ENCODE measurements at regions of chr5 and their contacts with region 1.

Region 1: GRCh38 chr5:172283020-172283861 is at the start of gene UBTD2:
- DNase-seq: peak; percentile 82
- H3K4me3 ChIP-seq: peak within 1 kb of the TSS; percentile 94
- H3K27ac ChIP-seq: peak within 1 kb of the TSS; percentile 44
- H3K4me1 ChIP-seq: peaks cover 25% of the 10 kb centered on the region
- CTCF ChIP-seq: peak; percentile 67; the same call in 1 of the 2 replicates
- total RNA-seq, gene UBTD2: 14.7 and 16.0 TPM in 2 replicates

Region 2: GRCh38 chr5:172095502-172096206 is 187.6 kb before region 1 on chr5:
- CTCF ChIA-PET with region 1: no interaction called
- POLR2A ChIA-PET with region 1: no interaction called
- intact Hi-C with region 1: no loop called
- DNase-seq: no peak
- H3K4me3 ChIP-seq: no peak overlapping the region
- H3K27ac ChIP-seq: no peak overlapping the region
- H3K4me1 ChIP-seq: no peaks in the 10 kb centered on the region
- CTCF ChIP-seq: 0 out of 2 replicates have a peak, but pooled peaks have one; percentile 10

Region 3: DNA sequence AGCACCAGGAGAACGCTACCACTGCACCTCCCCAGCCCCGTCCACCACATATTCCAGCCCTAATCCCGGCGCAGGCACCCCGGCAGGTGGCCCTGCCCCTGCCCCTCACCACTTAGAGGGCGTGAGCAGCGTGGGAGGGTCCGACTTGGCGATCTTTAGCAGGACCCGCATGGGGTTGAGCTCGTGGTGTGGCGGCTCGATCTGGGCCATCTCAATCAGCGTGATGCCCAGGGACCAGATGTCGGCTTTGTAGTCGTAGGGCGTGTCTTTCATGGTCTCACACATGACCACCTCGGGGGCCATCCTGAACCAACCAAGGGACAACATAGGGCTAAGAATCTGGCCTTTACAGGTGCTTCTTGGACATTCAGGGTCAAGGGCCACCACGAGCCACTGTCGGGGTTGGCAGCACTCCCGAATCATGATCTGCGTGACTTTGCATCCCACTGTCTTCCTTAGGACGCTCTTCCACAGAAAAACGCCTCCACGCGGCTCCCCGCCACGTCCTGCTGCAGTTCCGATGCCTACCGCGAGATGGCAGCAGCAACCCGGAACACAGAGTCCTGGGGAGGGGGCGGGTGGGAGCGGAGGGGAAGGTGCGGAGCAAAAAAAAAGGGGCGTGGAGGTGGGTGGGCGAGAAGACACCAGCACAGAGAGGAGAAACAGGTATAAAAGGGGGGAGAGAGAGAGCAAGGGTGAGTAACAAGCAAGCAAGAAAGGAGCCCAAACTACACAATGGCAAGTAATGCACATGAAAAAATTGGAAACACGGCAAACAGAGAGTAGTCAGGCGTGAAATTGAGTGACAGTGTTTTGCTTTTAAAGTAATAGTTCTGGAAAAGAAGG is 176.5 kb before region 1 on chr5:
- CTCF ChIA-PET with region 1: no interaction called
- POLR2A ChIA-PET with region 1: interaction called, 3 read pairs
- intact Hi-C with region 1: loop called (anchors 2 kb)
- DNase-seq: peak; percentile 57
- H3K4me3 ChIP-seq: peak overlapping the region; percentile 35
- H3K27ac ChIP-seq: no peak overlapping the region
- H3K4me1 ChIP-seq: peaks cover 31% of the 10 kb centered on the region
- CTCF ChIP-seq: peak; percentile 96

Region 4: GRCh38 chr5:172336676-172337285 is 53.5 kb after region 1 on chr5:
- CTCF ChIA-PET with region 1: no interaction called
- POLR2A ChIA-PET with region 1: no interaction called
- intact Hi-C with region 1: no loop called
- DNase-seq: no peak
- H3K4me3 ChIP-seq: no peak overlapping the region
- H3K27ac ChIP-seq: no peak overlapping the region
- H3K4me1 ChIP-seq: no peaks in the 10 kb centered on the region
- CTCF ChIP-seq: no peak